ENCODE measurements at regions of chr5 and their contacts with region 1.

Region 1: DNA sequence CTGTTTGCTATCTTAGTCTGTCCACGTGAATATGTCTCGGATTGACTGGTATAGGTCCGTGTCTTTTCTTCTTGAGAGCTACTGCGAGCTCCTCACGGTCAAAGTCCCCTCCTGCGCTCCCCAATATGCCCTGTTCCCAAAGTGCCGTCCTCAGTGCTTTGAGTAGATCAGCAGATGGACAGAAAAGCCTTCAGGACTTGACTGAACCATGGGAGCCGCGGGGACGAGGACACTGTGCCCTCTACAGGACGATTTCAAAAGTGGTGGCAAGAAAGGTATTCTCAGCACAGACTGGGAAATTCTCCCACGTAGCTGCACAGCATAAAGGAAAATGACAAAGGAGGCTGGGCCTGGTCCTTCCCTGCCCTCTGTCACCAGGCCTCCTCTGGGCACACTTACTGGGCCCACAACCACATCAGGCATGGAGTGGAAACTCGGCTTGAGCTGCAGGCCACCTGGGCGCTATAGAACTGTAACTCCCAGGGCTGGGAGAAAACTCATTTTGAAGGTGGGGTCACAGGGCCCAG is 16.6 kb upstream of the MTMR12 start:
- DNase-seq: peak; percentile 41
- H3K4me3 ChIP-seq: no peak overlapping the region
- H3K27ac ChIP-seq: no peak overlapping the region
- H3K4me1 ChIP-seq: peaks cover 11% of the 10 kb centered on the region
- H3K27me3 ChIP-seq: no peaks in the 10 kb centered on the region
- CTCF ChIP-seq: peak; percentile 63 to 73

Region 2: GRCh38 chr5:32174011-32174870 is 155.1 kb before region 1 on chr5 and contains the start of gene GOLPH3:
- CTCF ChIA-PET with region 1: no interaction called
- dilution Hi-C with region 1: no loop called
- in situ Hi-C with region 1: no loop called
- intact Hi-C with region 1: loop called (anchors 2 kb)
- DNase-seq: peak; percentile 88
- H3K4me3 ChIP-seq: peak within 1 kb of the TSS; percentile 75 to 99 (median 83)
- H3K27ac ChIP-seq: peak within 1 kb of the TSS; percentile 83
- H3K4me1 ChIP-seq: peaks cover 19% of the 10 kb centered on the region
- H3K27me3 ChIP-seq: no peaks in the 10 kb centered on the region
- CTCF ChIP-seq: no peak
- total RNA-seq, gene GOLPH3: 61.7 to 67.7 TPM

Region 3: GRCh38 chr5:32217886-32218396 is 111.4 kb before region 1 on chr5:
- CTCF ChIA-PET with region 1: no interaction called
- dilution Hi-C with region 1: no loop called
- in situ Hi-C with region 1: no loop called
- intact Hi-C with region 1: no loop called
- DNase-seq: no peak
- H3K4me3 ChIP-seq: no peak overlapping the region
- H3K27ac ChIP-seq: no peak overlapping the region
- H3K4me1 ChIP-seq: no peaks in the 10 kb centered on the region
- H3K27me3 ChIP-seq: no peaks in the 10 kb centered on the region
- CTCF ChIP-seq: no peak

Region 4: GRCh38 chr5:32312647-32313523 is 16.5 kb before region 1 on chr5 and contains the start of gene MTMR12:
- CTCF ChIA-PET with region 1: no interaction called
- dilution Hi-C with region 1: no loop called
- in situ Hi-C with region 1: no loop called
- intact Hi-C with region 1: loop called (anchors 1 kb)
- DNase-seq: peak; percentile 99
- H3K4me3 ChIP-seq: peak within 1 kb of the TSS; percentile 46 to 83 (median 81)
- H3K27ac ChIP-seq: peak within 1 kb of the TSS; percentile 75
- H3K4me1 ChIP-seq: peaks cover 16% of the 10 kb centered on the region
- H3K27me3 ChIP-seq: no peaks in the 10 kb centered on the region
- CTCF ChIP-seq: no peak
- total RNA-seq, gene MTMR12: 21.0 to 37.5 TPM

Region 5: DNA sequence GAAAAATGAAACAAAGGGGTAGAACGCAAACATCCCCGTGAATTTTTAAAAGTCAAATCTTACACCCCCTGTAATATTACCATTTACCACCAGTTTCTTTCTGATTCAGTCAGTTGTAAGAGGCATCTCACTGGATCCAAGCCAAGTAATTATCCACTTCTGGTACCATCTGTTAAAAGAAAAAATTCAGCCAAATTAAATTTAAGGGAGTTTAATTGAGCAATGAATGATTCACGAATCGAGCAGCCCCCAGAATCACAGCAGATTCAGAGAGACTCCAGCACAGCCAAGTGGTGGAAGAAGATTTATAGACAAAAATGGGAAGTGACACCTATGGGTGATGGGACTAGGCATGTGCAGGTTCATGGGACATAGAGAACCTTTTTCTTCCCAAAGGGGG is 13.3 kb after region 1 on chr5:
- CTCF ChIA-PET with region 1: interaction called, 10 read pairs
- dilution Hi-C with region 1: no loop called
- in situ Hi-C with region 1: no loop called
- intact Hi-C with region 1: no loop called
- DNase-seq: no peak
- H3K4me3 ChIP-seq: no peak overlapping the region
- H3K27ac ChIP-seq: no peak overlapping the region
- H3K4me1 ChIP-seq: no peaks in the 10 kb centered on the region
- H3K27me3 ChIP-seq: no peaks in the 10 kb centered on the region
- CTCF ChIP-seq: no peak

Region 6: GRCh38 chr5:32352685-32353084 is 23.3 kb after region 1 on chr5:
- CTCF ChIA-PET with region 1: no interaction called
- dilution Hi-C with region 1: no loop called
- in situ Hi-C with region 1: no loop called
- intact Hi-C with region 1: loop called (anchors 2 kb)
- DNase-seq: no peak
- H3K4me3 ChIP-seq: no peak overlapping the region
- H3K27ac ChIP-seq: no peak overlapping the region
- H3K4me1 ChIP-seq: no peaks in the 10 kb centered on the region
- H3K27me3 ChIP-seq: no peaks in the 10 kb centered on the region
- CTCF ChIP-seq: no peak

Measured in mammary epithelial cell (primary cell).